ENCODE measurements at regions of chr15 and their contacts with region 1.

Region 1: GRCh38 chr15:45429974-45430792 is 51.8 kb upstream of the GATM start:
- DNase-seq: peak; percentile 82
- H3K4me3 Mint-ChIP-seq: peak overlapping the region; percentile 75
- H3K27ac Mint-ChIP-seq: no peak overlapping the region
- H3K4me1 Mint-ChIP-seq: no peaks in the 10 kb centered on the region
- H3K27me3 Mint-ChIP-seq: peaks cover 34% of the 10 kb centered on the region

Region 2: GRCh38 chr15:45414215-45414885 is 15.8 kb before region 1 on chr15:
- intact Hi-C with region 1: no loop called
- DNase-seq: no peak
- H3K4me3 Mint-ChIP-seq: no peak overlapping the region
- H3K27ac Mint-ChIP-seq: peak overlapping the region; percentile 27
- H3K4me1 Mint-ChIP-seq: peaks cover 16% of the 10 kb centered on the region
- H3K27me3 Mint-ChIP-seq: no peaks in the 10 kb centered on the region

Region 3: DNA sequence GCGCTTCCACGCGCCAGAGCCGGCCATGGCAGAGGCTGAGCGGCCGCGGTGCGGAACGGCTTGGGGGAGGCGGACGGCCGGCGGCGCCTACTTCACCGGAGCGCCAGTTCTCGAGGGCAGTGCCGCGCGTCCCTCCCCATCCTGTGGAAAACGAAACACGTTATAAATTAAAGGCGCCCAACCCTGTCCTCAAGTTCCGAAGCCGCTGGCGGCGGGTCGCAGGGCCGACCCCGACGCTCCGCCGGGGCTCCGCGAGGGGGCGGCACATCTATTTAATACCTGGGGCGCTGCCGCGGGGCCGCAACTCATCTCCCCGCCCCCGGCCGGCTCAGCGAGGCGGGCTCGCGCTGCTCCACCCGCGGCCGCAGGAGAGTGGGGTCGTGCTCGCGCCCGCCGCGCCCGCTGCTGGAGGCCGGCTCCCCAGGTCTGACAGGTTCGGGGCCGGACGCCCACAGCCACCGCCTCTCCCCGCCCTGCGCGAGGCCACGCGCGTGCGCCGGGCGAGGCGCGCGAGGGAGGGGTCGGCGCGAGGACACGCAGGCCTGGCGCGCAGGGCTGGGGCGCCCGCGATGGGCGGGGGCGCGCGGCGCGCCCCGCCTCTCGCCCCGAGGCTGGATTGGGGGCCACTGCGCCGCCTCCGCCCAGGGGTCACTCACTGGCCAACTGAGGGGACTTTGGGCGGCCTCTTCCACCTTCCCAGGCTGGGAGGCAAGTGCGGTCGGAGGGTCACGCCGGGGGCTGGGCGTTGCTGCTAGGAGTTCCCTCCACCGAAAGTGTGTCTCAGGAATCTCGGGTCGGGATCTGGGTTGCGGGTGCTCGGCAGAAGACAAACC is 92.4 kb after region 1 on chr15 and contains the start of gene SLC30A4:
- intact Hi-C with region 1: loop called (anchors 1 kb)
- DNase-seq: peak; percentile 68
- H3K4me3 Mint-ChIP-seq: peak within 1 kb of the TSS; percentile 88
- H3K27ac Mint-ChIP-seq: peak within 1 kb of the TSS; percentile 66
- H3K4me1 Mint-ChIP-seq: peaks cover 22% of the 10 kb centered on the region
- H3K27me3 Mint-ChIP-seq: peaks cover 25% of the 10 kb centered on the region
- total RNA-seq, gene SLC30A4: 1.6 and 2.1 TPM in 2 replicates

Region 4: GRCh38 chr15:45678459-45679178 is 248.4 kb after region 1 on chr15:
- intact Hi-C with region 1: no loop called
- DNase-seq: no peak
- H3K4me3 Mint-ChIP-seq: no peak overlapping the region
- H3K27ac Mint-ChIP-seq: no peak overlapping the region
- H3K4me1 Mint-ChIP-seq: no peaks in the 10 kb centered on the region
- H3K27me3 Mint-ChIP-seq: no peaks in the 10 kb centered on the region

Measured in activated T-helper 1 cell treated with anti-CD3 and anti-CD28 coated beads, Interleukin-12 subunit alpha, Interleukin-12 subunit beta, Interleukin-2, Interleukin-4 antibody, amounts not matched to agents 30 ng/mL and 10 ng/mL and 1 ng/mL, durations not matched to agents 14 hours and 24 hours and 36 hours (primary cell).